Posterior vena cava (tissue), 2 donors: ENCODE measurements at regions of chr19 and their contacts with region 1.

Region 1: GRCh38 chr19:33010891-33011576 is 39.0 kb downstream of the FAAP24 start:
- DNase-seq: no peak

Region 2: GRCh38 chr19:33029746-33030303 is 18.8 kb after region 1 on chr19:
- intact Hi-C with region 1: loop called in 1 of 2 experiments (anchors 2 kb)
- DNase-seq: no peak

Region 3: DNA sequence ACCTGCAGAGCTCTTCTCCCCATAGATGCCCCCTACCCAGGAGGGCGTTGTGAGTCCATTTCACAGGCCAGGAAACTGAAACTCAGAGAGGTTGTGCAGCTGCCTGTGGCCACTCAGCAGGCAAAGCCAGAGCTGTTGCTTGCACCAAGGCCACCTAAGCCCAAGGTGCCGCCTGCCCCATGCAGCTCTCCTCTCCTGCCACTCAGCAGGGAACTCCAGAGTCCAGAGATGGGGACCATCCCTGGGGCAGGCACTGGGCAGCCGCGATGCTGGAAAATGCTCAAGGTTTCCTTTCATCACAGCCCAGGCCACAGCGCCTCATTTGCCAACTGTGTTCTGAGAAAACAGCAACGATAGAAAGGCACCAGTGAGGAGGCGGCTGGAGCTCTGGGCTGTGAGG is 551.6 kb after region 1 on chr19:
- intact Hi-C with region 1: no loop called
- DNase-seq: peak; percentile 35